H1 (cell line): ENCODE measurements at regions of chr14 and their contacts with region 1.

Region 1: DNA sequence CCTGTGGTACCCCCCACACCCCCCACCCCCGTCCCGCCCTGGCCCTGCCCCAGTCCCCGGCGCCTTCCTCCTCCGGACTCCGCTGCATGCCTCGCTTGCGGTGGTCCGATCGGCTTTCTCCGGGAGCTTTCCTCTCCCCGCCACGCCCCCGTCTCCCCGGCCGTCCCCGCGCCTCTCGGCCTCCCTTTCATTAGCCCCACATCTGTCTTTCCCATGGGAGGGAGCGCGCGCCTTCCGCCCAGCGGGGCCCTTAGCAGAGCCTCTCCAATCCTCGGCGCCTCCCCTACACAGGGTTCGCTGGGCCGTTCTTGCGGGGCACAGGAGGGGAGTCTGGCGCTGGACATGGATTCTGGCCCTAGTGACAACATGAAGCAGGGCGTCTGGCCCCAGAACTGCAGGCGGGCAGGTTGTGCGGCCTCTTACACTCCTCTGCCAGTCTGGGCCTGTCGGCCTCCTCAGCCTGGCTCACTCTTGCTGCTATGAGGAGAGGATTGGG is 1.5 kb upstream of the EFS start:
- DNase-seq: peak in 1 of 2 experiments; percentile 92
- H3K4me3 ChIP-seq: peak overlapping the region; percentile 47 to 79 (median 77)
- H3K27ac ChIP-seq: peak overlapping the region; percentile 65; the same call in 1 of the 2 replicates
- H3K4me1 ChIP-seq: peaks cover 2 to 22% (median 14%) of the 10 kb centered on the region in 4 experiments; a peak in 6 of 7 replicates
- H3K27me3 ChIP-seq: peaks cover 0 to 12% (median 10%) of the 10 kb centered on the region in 4 experiments; a peak in 5 of 7 replicates
- CTCF ChIP-seq: no peak
- EP300 ChIP-seq: no peak
- POLR2A ChIP-seq: no peak
- RAD21 ChIP-seq: no peak

Region 2: GRCh38 chr14:23259426-23259825 is 107.0 kb before region 1 on chr14:
- CTCF ChIA-PET with region 1: interaction called, 10 read pairs
- POLR2A ChIA-PET with region 1: no interaction called
- DNase-seq: no peak
- H3K4me3 ChIP-seq: no peak overlapping the region
- H3K27ac ChIP-seq: no peak overlapping the region
- H3K4me1 ChIP-seq: peaks cover 0 to 6% (median 0%) of the 10 kb centered on the region in 4 experiments; a peak in 1 of 7 replicates
- H3K27me3 ChIP-seq: no peaks in the 10 kb centered on the region
- CTCF ChIP-seq: no peak
- EP300 ChIP-seq: no peak
- POLR2A ChIP-seq: no peak
- RAD21 ChIP-seq: no peak

Region 3: DNA sequence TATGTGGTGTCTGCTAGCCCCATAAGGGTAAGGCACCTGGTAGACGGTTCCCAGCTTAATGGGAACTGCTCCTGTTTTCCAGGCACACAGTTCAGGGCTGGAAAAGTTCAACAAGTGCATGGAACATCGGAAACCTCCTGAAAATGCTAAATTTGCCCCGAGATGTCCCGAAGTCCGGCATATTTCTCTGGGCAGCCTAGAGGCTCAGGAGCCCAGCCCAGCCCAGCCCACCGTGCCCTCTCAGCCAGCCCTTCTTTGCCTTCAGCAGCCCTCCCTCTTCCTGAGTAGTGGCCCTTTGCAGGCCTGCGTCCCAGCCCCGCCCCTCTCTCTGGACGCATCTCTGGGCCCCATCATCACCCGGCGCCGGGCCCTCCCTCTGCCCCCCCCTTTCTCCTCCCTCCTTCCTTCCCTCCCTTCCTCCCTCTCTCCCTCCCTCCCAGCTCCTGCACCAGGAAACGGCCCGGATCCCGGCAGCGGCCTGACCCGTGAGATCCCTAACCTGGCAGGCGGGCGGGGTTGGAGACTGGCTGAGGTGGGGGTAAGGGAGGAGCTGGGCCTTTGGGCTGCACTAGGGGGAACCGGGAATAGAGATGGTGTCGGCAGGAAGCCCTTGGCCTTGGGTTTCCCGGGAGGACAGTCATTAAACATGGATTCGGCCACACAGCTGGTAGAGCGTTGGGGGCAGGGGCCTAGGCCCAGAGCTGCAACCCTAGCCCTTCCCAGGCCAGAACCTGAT is 59.9 kb before region 1 on chr14 and contains the start of gene BCL2L2:
- CTCF ChIA-PET with region 1: interaction called, 12 read pairs
- POLR2A ChIA-PET with region 1: interaction called, 3 read pairs
- DNase-seq: peak; percentile 70 to 90
- H3K4me3 ChIP-seq: peak within 1 kb of the TSS; percentile 57 to 90 (median 83)
- H3K27ac ChIP-seq: peak within 1 kb of the TSS; percentile 83; the same call in 1 of the 2 replicates
- H3K4me1 ChIP-seq: peaks cover 0 to 3% (median 1%) of the 10 kb centered on the region in 4 experiments; a peak in 4 of 7 replicates
- H3K27me3 ChIP-seq: peaks cover 0 to 12% (median 5%) of the 10 kb centered on the region in 4 experiments; a peak in 4 of 7 replicates
- CTCF ChIP-seq: no peak
- EP300 ChIP-seq: peak in 1 of 2 experiments; percentile 79; a peak in 1 of 3 replicates
- POLR2A ChIP-seq: peak; percentile 85 to 91
- RAD21 ChIP-seq: 0 out of 4 replicates have a peak, but pooled peaks of 1 of the 2 experiments have one; percentile 9
- total RNA-seq, gene BCL2L2: 13.3 and 13.8 TPM in 2 replicates

Region 4: GRCh38 chr14:23344442-23344841 is 22.0 kb before region 1 on chr14:
- CTCF ChIA-PET with region 1: interaction called, 69 read pairs
- POLR2A ChIA-PET with region 1: interaction called, 73 read pairs
- DNase-seq: no peak
- H3K4me3 ChIP-seq: no peak overlapping the region
- H3K27ac ChIP-seq: no peak overlapping the region
- H3K4me1 ChIP-seq: peaks cover 0 to 4% (median 1%) of the 10 kb centered on the region in 4 experiments; a peak in 3 of 7 replicates
- H3K27me3 ChIP-seq: no peaks in the 10 kb centered on the region
- CTCF ChIP-seq: no peak
- EP300 ChIP-seq: no peak
- POLR2A ChIP-seq: no peak
- RAD21 ChIP-seq: no peak

Region 5: DNA sequence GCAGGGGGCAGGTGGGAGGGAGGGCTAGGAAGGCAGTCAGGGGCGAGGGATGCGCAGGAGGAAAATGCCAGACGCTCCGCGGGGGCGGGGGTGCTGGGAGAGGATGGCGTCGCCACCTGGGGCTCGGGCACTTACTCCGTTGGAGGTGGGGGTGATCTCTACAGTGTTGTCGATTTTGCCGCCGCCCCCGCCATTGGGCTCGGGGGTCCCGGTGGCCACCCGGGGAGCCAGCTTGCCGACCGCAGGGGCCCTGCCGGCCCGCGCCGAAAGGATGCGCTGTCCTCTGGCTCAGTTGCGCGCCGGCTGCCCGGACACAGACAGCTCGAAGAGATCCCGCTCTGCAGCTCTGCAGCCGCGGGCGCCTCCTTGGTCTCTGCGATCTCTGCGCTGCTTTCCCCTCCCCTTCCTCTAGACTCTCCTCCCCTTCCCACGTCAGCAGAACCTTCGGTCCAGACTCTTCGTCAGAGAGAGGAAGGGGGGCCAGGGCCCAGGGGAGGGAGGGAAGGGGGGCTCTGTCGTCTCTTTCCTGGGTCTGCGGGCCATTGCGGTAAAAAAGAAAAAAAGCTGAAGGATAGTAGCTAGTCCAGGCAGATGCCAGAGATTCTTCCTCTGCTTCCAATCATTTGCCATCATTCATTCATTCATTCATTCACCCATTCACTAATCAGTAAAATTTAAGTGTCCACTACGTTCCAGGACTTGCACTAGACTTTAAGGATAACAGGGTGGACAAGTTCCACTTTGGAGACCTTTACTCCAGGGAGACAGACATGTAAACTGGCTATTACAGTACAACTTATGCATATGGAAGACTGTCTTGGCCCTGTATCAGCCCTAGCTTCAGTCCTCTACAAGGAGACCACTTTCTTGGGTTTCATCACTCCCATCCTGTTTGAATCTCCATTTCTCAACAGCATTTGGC is 13.7 kb before region 1 on chr14 and contains the start of gene SLC22A17:
- CTCF ChIA-PET with region 1: interaction called, 333 read pairs
- POLR2A ChIA-PET with region 1: interaction called, 73 read pairs
- DNase-seq: peak in 1 of 2 experiments; percentile 86
- H3K4me3 ChIP-seq: peak within 1 kb of the TSS; percentile 37 to 84 (median 73)
- H3K27ac ChIP-seq: 0 out of 2 replicates have a peak within 1 kb of the TSS, but pooled peaks have one; percentile 8
- H3K4me1 ChIP-seq: peaks cover 0 to 3% (median 2%) of the 10 kb centered on the region in 4 experiments; a peak in 4 of 7 replicates
- H3K27me3 ChIP-seq: peaks cover 0 to 14% (median 10%) of the 10 kb centered on the region in 4 experiments; a peak in 6 of 7 replicates
- CTCF ChIP-seq: peak in 2 of 3 experiments; percentile 11 to 22; a peak in 2 of 4 replicates
- EP300 ChIP-seq: no peak
- POLR2A ChIP-seq: peak; percentile 36 to 91
- RAD21 ChIP-seq: peak in 1 of 2 experiments; percentile 16; a peak in 1 of 4 replicates
- total RNA-seq, gene SLC22A17: 39.4 and 43.0 TPM in 2 replicates

Region 6: DNA sequence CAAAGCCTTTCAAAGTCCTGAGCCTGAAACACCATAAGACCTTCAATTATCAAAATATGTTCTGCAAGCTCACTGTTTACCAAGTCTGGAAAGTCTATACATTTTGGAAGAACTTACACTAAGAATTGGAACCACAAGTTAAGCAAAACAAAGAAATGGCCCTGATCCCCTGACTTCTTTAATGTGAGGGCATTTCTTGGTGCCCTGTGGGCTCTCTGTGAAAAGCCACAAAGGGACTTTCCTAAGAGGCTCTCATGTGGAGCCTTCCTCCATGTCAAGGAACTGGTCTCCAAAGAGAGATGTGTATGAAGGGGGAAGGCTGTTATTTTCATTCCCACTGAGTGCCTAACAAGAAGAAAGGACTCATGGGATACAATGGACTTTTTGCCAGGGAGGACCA is 55.1 kb after region 1 on chr14:
- CTCF ChIA-PET with region 1: no interaction called
- POLR2A ChIA-PET with region 1: no interaction called
- DNase-seq: no peak
- H3K4me3 ChIP-seq: no peak overlapping the region
- H3K27ac ChIP-seq: no peak overlapping the region
- H3K4me1 ChIP-seq: no peaks in the 10 kb centered on the region; a peak in 1 of 7 replicates
- H3K27me3 ChIP-seq: no peaks in the 10 kb centered on the region; a peak in 1 of 7 replicates
- CTCF ChIP-seq: no peak
- EP300 ChIP-seq: no peak
- POLR2A ChIP-seq: no peak
- RAD21 ChIP-seq: no peak